Left lung (tissue), 14 donors: ENCODE measurements at regions of chr7 and their contacts with region 1.

Region 1: DNA sequence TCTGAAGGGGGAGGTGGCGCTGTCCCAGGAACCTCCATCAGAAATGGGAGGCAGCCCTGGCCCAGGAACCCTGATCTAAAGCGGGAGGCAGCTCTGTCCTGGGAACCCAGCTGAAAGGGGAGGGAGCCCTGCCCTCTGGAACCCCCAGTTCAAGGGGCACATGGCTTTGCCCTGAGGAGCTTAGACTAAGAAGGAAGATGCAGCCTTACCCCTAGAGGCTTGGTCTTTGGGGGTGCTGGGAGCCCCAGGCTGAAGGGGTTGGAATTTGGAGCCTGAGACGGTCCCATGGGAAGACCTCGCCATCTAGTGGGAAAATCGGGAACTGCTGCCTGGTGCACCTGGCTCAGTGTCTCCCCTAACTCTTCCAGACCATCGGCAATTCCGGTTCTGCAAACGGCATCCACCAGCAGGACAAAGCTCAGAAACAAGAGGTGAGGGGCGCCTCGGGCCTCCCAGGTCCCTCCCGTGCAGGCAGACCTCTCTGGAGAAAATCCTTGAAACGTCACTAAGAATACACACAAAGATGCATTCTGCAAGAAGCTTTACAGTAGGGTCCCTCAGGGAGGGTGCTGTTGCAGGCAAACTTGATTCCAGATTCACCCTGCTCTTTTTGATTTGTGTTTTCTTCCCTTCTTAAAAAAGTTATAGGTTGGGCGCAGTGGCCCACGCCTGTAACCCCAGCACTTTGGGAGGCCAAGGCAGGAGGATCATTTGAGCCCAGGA is 52.4 kb upstream of the GTF2IRD1 start:
- DNase-seq: peak in 3 of 4 donors; percentile 55 to 73 (median 60)
- ATAC-seq: peak; percentile 82
- H3K4me3 ChIP-seq: no peak overlapping the region
- H3K27ac ChIP-seq: no peak overlapping the region
- H3K4me1 ChIP-seq: no peaks in the 10 kb centered on the region
- H3K27me3 ChIP-seq: no peaks in the 10 kb centered on the region
- CTCF ChIP-seq: peak; percentile 91 to 96

Region 2: GRCh38 chr7:74061840-74062539 is 339.3 kb before region 1 on chr7:
- intact Hi-C with region 1: loop called in 1 of 2 experiments (anchors 10 kb)
- DNase-seq: peak; percentile 48 to 90 (median 88)
- ATAC-seq: peak; percentile 93
- H3K4me3 ChIP-seq: peak overlapping the region; percentile 12 to 28
- H3K27ac ChIP-seq: peak overlapping the region; percentile 84 to 92
- H3K4me1 ChIP-seq: peaks cover 0 to 15% of the 10 kb centered on the region in 2 donors
- H3K27me3 ChIP-seq: no peaks in the 10 kb centered on the region
- CTCF ChIP-seq: no peak

Region 3: GRCh38 chr7:74206589-74207120 is 194.6 kb before region 1 on chr7:
- intact Hi-C with region 1: loop called in 1 of 2 experiments (anchors 5 kb)
- DNase-seq: peak; percentile 66 to 97 (median 84)
- ATAC-seq: peak; percentile 94
- H3K4me3 ChIP-seq: peak overlapping the region in 1 of 2 donors; percentile 1
- H3K27ac ChIP-seq: no peak overlapping the region
- H3K4me1 ChIP-seq: peaks cover 0 to 37% of the 10 kb centered on the region in 2 donors
- H3K27me3 ChIP-seq: no peaks in the 10 kb centered on the region
- CTCF ChIP-seq: peak; percentile 92 to 98